ENCODE measurements at regions of chr20 and their contacts with region 1.

Region 1: GRCh38 chr20:31497838-31498535 is 16.3 kb upstream of the HM13 start:
- DNase-seq: no peak
- ATAC-seq: no peak
- H3K4me3 ChIP-seq: no peak overlapping the region
- H3K27ac ChIP-seq: no peak overlapping the region
- H3K4me1 ChIP-seq: no peaks in the 10 kb centered on the region
- H3K27me3 ChIP-seq: peaks cover 23% of the 10 kb centered on the region; the same call in 1 of the 2 replicates
- CTCF ChIP-seq: no peak

Region 2: GRCh38 chr20:31414380-31414779 is 83.6 kb before region 1 on chr20:
- CTCF ChIA-PET with region 1: interaction called, 5 read pairs
- POLR2A ChIA-PET with region 1: no interaction called
- intact Hi-C with region 1: loop called (anchors 1 kb)
- DNase-seq: no peak
- ATAC-seq: no peak
- H3K4me3 ChIP-seq: no peak overlapping the region
- H3K27ac ChIP-seq: no peak overlapping the region
- H3K4me1 ChIP-seq: no peaks in the 10 kb centered on the region
- H3K27me3 ChIP-seq: peaks cover 49% of the 10 kb centered on the region
- CTCF ChIP-seq: no peak